ENCODE measurements at regions of chr15 and their contacts with region 1.

Region 1: DNA sequence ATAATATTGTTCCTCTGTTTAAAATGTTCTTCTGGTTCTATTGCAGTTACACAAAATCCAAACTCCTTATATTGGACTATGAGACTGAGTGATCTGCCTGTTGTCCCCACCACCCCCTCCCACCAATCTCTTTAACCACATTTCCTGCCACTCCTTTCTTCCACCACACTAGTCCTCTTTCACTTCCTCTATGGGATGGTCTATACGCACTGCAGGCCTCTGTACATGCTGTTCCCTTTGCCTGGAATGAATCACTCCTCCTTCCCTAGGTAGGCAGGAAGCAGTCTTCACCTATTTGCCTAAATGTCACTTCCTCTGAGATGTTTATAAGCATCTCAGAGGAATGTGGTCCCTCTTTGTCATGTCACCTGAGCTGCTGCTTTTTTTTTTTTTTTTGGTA is 4.0 kb downstream of the MAP2K1 start:
- DNase-seq: no peak
- ATAC-seq: no peak
- H3K4me3 ChIP-seq: no peak overlapping the region
- H3K27ac ChIP-seq: peak overlapping the region in 1 of 2 donors; percentile 48
- H3K4me1 ChIP-seq: peaks cover 9 to 72% of the 10 kb centered on the region in 2 donors
- H3K27me3 ChIP-seq: no peaks in the 10 kb centered on the region
- CTCF ChIP-seq: no peak

Region 2: DNA sequence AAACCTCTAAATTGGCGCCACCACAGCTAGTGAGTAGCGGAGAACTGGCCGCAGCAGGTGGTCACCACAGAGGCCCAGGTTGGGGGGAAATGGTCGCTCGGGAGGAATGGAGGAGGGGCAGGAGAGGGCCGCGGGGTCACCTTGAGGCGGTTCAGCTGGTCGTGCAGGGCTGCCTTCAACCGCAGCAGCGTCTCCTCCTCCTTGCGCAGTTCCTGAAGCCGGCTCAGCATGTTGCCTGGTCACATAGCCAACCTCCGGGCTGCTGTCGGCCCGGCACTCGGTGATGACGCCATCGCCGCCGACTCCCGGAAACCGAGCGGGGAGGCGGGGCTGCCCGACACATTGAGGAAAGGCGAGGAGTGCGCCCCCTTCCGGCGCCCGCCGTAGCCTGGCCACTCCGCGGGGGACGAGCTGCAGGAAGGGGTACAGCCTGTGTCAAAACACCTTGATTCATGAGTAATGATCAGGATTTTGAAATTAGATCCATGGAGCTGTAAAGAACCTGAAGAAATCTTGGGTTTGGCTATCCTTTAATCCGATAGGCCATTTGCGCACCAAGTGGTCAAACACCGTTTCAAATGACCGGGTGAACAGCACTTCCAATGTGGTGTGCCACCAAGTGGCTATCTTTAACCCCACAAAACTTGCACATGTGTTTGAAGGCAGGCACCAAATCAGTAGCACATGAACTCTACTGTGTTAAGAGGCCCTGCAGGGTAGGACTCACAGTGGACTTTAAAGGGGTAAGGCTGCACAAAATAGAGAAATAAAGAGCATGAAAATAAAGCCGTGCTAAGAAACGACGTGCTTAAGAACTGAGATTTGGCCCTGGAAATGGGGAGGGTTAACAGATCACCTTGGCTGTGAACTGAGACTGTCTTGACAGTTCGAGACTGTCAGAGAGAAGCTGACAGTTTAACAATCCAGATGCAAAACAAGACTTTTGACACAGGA is 107.1 kb after region 1 on chr15 and contains the start of gene SNAPC5:
- intact Hi-C with region 1: loop called in 1 of 2 experiments (anchors 10 kb)
- DNase-seq: peak; percentile 93 to 100 (median 96)
- ATAC-seq: peak; percentile 98
- H3K4me3 ChIP-seq: peak within 1 kb of the TSS; percentile 86 to 91
- H3K27ac ChIP-seq: peak within 1 kb of the TSS; percentile 79 to 90
- H3K4me1 ChIP-seq: peaks cover 14 to 68% of the 10 kb centered on the region in 2 donors
- H3K27me3 ChIP-seq: no peaks in the 10 kb centered on the region
- CTCF ChIP-seq: peak; percentile 95 to 98
- polyA plus RNA-seq, gene SNAPC5: 23.7 to 33.7 (median 27.7) TPM

Measured in left lung (tissue), 14 donors.